Left colon (tissue), 2 donors: ENCODE measurements at regions of chr10 and their contacts with region 1.

Region 1: GRCh38 chr10:52308251-52309031 is 5.6 kb upstream of the DKK1 start:
- DNase-seq: peak; percentile 29 to 38
- ATAC-seq: peak; percentile 81

Region 2: GRCh38 chr10:52215745-52216361 is 92.6 kb before region 1 on chr10:
- intact Hi-C with region 1: no loop called
- DNase-seq: peak in 1 of 2 donors; percentile 21
- ATAC-seq: peak; percentile 66

Region 3: GRCh38 chr10:52437205-52437646 is 128.8 kb after region 1 on chr10:
- intact Hi-C with region 1: no loop called
- DNase-seq: no peak
- ATAC-seq: no peak

Region 4: DNA sequence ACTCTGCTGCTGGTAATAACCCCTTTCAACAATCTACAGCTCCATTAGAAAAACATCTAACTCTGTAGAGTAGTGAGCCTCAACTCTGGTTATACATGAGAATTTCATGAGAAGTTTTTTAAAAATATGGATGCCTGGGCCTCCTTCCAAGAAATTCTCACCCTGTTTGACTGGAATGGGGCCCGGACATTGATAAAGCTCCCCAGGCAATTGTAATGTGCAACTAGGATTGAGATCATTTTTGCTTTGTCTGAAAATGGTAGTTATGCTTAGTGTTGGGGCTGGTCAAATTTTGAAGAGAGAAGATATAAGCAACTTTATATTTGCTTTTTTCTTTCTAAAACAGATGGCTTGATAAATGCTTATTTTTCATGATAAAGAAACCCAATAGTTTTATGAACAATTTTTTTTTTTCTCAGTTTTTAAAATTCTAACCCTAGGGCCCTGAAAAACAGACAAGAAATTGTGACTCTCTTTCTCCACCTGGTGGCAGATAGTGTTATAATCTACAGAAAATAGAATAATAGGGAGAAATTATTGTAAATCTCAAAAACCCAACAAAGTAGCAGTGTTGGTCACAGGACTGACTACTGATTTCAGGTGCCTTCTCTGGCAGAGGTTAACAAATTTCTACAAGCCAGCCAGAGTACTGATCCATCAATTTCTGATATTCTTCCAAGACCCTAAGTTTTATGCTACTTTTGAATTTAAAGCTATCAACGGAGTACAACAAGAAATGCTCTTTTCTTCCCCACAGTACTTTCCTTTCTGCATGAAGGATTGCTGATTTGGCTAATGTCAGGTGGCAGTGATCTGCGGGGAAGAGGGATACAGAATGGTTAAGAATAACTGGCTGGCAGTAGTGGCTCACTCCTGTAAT is 180.4 kb after region 1 on chr10:
- intact Hi-C with region 1: loop called in 1 of 2 experiments (anchors 10 kb)
- DNase-seq: no peak
- ATAC-seq: no peak